Dorsolateral prefrontal cortex (tissue), 120 donors: ENCODE measurements at regions of chr2 and their contacts with region 1.

Region 1: DNA sequence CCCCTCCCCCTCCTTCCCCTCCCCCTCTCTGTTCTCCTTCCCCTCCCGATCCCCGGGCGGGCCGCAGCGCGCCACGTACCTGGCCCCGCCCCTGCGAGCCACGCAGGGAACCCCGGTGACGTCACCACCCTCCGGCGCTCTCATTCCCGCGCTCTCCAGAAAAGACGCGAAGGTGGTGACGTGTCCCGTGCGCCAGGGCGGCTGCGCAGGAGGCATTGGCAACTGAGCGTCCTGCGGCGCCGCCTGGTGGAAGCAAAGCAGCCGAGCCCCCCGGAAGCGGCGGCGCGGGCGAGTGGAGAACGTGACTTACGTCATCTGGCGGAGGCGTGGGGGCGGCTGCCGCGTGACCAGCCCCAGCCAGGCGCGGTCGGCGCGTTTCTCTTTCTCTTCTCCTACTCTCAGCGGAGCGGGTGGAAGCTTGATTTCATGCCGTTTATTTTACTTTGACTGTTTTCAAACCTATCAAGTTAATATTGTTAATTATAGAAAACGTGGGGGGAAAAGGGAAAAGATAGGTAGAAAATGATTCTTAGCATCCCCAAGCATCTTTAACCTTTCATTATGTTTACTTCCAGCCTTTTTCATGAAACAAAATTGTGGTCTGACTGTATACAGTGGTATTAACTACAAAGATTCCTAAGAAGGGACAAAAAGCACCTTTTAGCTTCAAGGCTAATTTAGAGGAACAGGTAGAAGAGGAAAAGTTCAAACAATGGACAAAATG is 48.1 kb downstream of the C2orf42 start:
- DNase-seq: peak; percentile 89 to 96 (median 94)
- H3K4me3 ChIP-seq: peak overlapping the region; percentile 43 to 88 (median 75)
- H3K27ac ChIP-seq: peak overlapping the region; percentile 90 to 100 (median 100)
- H3K27me3 ChIP-seq: no peaks in the 10 kb centered on the region
- CTCF ChIP-seq: peak; percentile 92 to 100 (median 97)

Region 2: DNA sequence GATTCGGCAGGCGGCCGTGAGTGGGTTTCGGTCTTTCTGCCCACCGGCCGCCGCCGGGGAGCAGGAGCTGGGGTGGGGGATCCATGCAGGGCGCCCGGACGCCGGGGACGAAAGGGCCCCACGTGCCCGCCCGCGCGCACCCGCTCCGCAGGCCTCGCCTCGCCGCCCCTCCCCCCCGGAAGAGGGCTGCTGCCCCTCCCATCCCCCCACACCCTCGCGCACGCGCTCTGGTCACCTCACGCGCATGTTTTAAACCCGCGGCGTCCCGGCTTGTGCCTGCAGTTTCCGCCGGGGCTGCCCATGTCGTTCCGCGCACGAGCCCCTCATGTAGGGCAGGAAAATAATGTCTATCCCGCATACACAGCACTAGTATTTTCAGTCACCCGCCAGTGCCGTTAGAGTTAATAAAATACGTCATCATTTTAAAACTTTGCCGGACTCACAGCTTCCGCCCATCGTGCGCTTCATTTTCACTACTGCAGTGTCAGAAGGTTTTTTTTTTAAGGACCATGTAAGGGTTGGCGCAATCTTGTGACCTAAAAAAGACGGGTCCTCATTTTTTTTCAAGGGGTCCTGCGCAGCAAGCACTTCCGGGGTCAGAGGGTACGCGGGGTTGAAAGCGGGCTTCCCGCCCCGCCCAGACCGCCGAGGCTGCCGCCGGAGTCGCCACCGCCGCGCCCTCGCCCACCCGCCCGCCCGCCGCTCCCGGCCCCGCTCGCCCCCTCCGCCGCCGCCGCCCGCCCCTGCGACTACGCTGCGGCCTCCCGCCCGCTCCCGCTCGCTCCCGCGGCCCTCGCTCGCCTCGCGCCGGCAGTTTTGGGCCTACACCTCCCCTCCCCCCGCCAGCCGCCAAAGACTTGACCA is 55.7 kb before region 1 on chr2 and contains the start of gene PCBP1:
- intact Hi-C with region 1: loop called (anchors 1 kb)
- DNase-seq: peak; percentile 81 to 92 (median 88)
- H3K4me3 ChIP-seq: peak within 1 kb of the TSS; percentile 61 to 99 (median 92)
- H3K27ac ChIP-seq: peak within 1 kb of the TSS; percentile 100
- H3K27me3 ChIP-seq: no peaks in the 10 kb centered on the region
- CTCF ChIP-seq: peak in 2 of 56 donors; percentile 6 to 8
- total RNA-seq, gene PCBP1: 118 to 237 (median 174) TPM

Region 3: GRCh38 chr2:70124983-70125480 is 17.7 kb before region 1 on chr2:
- intact Hi-C with region 1: loop called in 1 of 2 experiments (anchors 1 kb)
- DNase-seq: peak in 9 of 10 donors; percentile 56 to 74 (median 64)
- H3K4me3 ChIP-seq: peak overlapping the region; percentile 54 to 87 (median 74)
- H3K27ac ChIP-seq: peak overlapping the region; percentile 96 to 100 (median 100)
- H3K27me3 ChIP-seq: no peaks in the 10 kb centered on the region
- CTCF ChIP-seq: peak in 4 of 56 donors; percentile 9 to 19 (median 14)

Region 4: DNA sequence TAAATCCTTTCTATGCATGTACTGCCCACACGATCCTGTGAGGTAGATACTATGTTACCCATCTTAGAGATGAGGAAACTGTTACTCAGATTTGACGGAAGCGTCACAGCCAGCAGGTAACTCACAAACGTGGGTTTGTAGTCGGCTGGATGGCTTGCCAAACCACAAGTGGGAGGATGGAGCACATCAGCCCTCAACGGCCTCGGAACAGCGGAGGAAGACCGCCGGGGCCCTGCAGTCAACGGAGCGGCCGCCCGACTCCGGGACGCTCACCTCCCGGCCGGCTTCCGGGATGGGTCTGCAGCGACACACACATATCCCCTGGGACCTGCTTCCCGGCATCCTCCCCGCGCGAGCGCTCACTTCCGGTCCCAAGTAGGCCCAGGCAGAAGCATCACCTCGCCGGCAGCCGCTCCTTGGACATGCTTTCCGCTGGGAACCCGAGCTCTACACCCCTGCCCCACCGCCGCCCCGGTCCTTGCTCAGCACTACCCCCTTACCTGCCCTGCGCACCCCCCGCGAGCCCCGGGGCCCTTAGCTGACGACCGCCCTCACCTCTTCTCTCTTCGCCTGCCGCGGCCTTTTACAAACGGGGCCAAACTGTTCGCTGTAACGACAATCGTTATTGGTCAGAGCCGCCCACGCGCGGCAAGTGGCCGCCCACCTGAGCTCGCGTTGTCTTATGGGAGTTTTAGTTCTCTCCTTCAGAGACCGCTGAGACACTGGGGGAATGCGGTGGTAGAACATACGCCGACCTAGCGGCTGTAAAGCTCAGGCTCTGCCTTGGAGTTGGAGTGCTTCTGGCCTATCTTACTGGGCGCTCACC is 47.9 kb after region 1 on chr2 and contains the start of gene C2orf42:
- intact Hi-C with region 1: loop called in 1 of 2 experiments (anchors 2 kb)
- DNase-seq: peak; percentile 93 to 98 (median 96)
- H3K4me3 ChIP-seq: peak within 1 kb of the TSS; percentile 45 to 99 (median 86)
- H3K27ac ChIP-seq: peak within 1 kb of the TSS; percentile 87 to 99 (median 96)
- H3K27me3 ChIP-seq: no peaks in the 10 kb centered on the region
- CTCF ChIP-seq: peak in 30 of 56 donors; percentile 7 to 51 (median 22)
- total RNA-seq, gene C2orf42: 20.6 to 44.6 (median 32.0) TPM

Region 5: GRCh38 chr2:70248181-70248847 is 105.6 kb after region 1 on chr2 and contains the start of gene TIA1:
- intact Hi-C with region 1: loop called in 1 of 2 experiments (anchors 5 kb)
- DNase-seq: peak; percentile 91 to 96 (median 94)
- H3K4me3 ChIP-seq: peak within 1 kb of the TSS; percentile 62 to 100 (median 92)
- H3K27ac ChIP-seq: peak within 1 kb of the TSS; percentile 77 to 100 (median 98)
- H3K27me3 ChIP-seq: no peaks in the 10 kb centered on the region
- CTCF ChIP-seq: peak in 8 of 56 donors; percentile 4 to 35 (median 14)
- total RNA-seq, gene TIA1: 80.0 to 187 (median 133) TPM